ENCODE measurements at regions of chr20 and their contacts with region 1.

Region 1: GRCh38 chr20:21235484-21236445 is 67.4 kb upstream of the XRN2 start:
- DNase-seq: peak; percentile 62
- ATAC-seq: peak; percentile 49
- H3K4me3 ChIP-seq: no peak overlapping the region
- H3K4me3 Mint-ChIP-seq: no peak overlapping the region
- H3K27ac ChIP-seq: no peak overlapping the region
- H3K27ac Mint-ChIP-seq: no peak overlapping the region
- H3K4me1 ChIP-seq: peaks cover 0 to 4% of the 10 kb centered on the region in 2 donors
- H3K4me1 Mint-ChIP-seq: peaks cover 1% of the 10 kb centered on the region
- H3K27me3 ChIP-seq: no peaks in the 10 kb centered on the region
- H3K27me3 Mint-ChIP-seq: no peaks in the 10 kb centered on the region
- CTCF ChIP-seq: peak; percentile 95

Region 2: GRCh38 chr20:21182832-21183563 is 52.8 kb before region 1 on chr20:
- CTCF ChIA-PET with region 1: no interaction called
- POLR2A ChIA-PET with region 1: no interaction called
- intact Hi-C with region 1: no loop called
- DNase-seq: no peak
- ATAC-seq: no peak
- H3K4me3 ChIP-seq: no peak overlapping the region
- H3K4me3 Mint-ChIP-seq: no peak overlapping the region
- H3K27ac ChIP-seq: no peak overlapping the region
- H3K27ac Mint-ChIP-seq: no peak overlapping the region
- H3K4me1 ChIP-seq: no peaks in the 10 kb centered on the region
- H3K4me1 Mint-ChIP-seq: no peaks in the 10 kb centered on the region
- H3K27me3 ChIP-seq: no peaks in the 10 kb centered on the region
- H3K27me3 Mint-ChIP-seq: no peaks in the 10 kb centered on the region
- CTCF ChIP-seq: no peak

Region 3: GRCh38 chr20:21225215-21225947 is 10.4 kb before region 1 on chr20:
- CTCF ChIA-PET with region 1: interaction called, 23 read pairs
- POLR2A ChIA-PET with region 1: no interaction called
- intact Hi-C with region 1: no loop called
- DNase-seq: no peak
- ATAC-seq: no peak
- H3K4me3 ChIP-seq: no peak overlapping the region
- H3K4me3 Mint-ChIP-seq: no peak overlapping the region
- H3K27ac ChIP-seq: no peak overlapping the region
- H3K27ac Mint-ChIP-seq: no peak overlapping the region
- H3K4me1 ChIP-seq: peaks cover 6 to 8% of the 10 kb centered on the region in 2 donors
- H3K4me1 Mint-ChIP-seq: peaks cover 7% of the 10 kb centered on the region
- H3K27me3 ChIP-seq: no peaks in the 10 kb centered on the region
- H3K27me3 Mint-ChIP-seq: no peaks in the 10 kb centered on the region
- CTCF ChIP-seq: no peak

Region 4: GRCh38 chr20:21246161-21246560 is 10.4 kb after region 1 on chr20:
- CTCF ChIA-PET with region 1: interaction called, 20 read pairs
- POLR2A ChIA-PET with region 1: no interaction called
- intact Hi-C with region 1: no loop called
- DNase-seq: no peak
- ATAC-seq: no peak
- H3K4me3 ChIP-seq: no peak overlapping the region
- H3K4me3 Mint-ChIP-seq: no peak overlapping the region
- H3K27ac ChIP-seq: no peak overlapping the region
- H3K27ac Mint-ChIP-seq: no peak overlapping the region
- H3K4me1 ChIP-seq: no peaks in the 10 kb centered on the region
- H3K4me1 Mint-ChIP-seq: no peaks in the 10 kb centered on the region
- H3K27me3 ChIP-seq: no peaks in the 10 kb centered on the region
- H3K27me3 Mint-ChIP-seq: no peaks in the 10 kb centered on the region
- CTCF ChIP-seq: no peak

Region 5: DNA sequence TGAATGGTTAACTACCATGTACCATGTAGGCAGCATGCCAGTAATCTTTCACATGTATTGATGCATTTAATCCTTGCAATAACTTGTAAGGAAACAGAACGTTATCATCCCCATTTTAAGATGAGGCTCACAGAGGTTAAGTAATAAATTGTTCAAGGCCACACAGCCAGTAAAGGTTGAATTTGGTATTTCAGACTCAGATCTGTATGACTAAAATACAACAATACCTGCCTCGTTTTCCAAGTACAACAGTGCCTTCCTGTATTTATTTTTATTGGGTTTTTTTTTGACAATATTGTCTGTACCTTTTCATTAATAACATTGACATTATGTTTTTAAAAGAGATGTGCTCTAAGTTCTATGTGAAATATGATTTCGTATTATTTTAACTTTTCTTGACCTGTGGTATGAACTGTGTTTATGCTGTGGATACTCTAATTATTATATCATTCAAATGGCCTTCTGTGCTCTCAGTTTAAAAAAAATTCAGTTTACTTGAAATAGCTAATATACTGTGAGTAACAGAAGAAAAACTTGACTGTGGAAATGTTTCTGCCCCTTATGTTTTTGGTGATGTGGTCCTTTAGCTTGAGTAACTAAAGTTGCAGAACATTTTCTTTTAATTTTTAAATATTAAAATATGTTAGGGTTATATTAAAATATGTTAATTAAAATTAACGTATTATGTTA is 107.0 kb after region 1 on chr20:
- CTCF ChIA-PET with region 1: no interaction called
- POLR2A ChIA-PET with region 1: no interaction called
- intact Hi-C with region 1: loop called (anchors 10 kb)
- DNase-seq: no peak
- ATAC-seq: no peak
- H3K4me3 ChIP-seq: no peak overlapping the region
- H3K4me3 Mint-ChIP-seq: no peak overlapping the region
- H3K27ac ChIP-seq: no peak overlapping the region
- H3K27ac Mint-ChIP-seq: no peak overlapping the region
- H3K4me1 ChIP-seq: no peaks in the 10 kb centered on the region
- H3K4me1 Mint-ChIP-seq: no peaks in the 10 kb centered on the region
- H3K27me3 ChIP-seq: no peaks in the 10 kb centered on the region
- H3K27me3 Mint-ChIP-seq: no peaks in the 10 kb centered on the region
- CTCF ChIP-seq: no peak

Region 6: DNA sequence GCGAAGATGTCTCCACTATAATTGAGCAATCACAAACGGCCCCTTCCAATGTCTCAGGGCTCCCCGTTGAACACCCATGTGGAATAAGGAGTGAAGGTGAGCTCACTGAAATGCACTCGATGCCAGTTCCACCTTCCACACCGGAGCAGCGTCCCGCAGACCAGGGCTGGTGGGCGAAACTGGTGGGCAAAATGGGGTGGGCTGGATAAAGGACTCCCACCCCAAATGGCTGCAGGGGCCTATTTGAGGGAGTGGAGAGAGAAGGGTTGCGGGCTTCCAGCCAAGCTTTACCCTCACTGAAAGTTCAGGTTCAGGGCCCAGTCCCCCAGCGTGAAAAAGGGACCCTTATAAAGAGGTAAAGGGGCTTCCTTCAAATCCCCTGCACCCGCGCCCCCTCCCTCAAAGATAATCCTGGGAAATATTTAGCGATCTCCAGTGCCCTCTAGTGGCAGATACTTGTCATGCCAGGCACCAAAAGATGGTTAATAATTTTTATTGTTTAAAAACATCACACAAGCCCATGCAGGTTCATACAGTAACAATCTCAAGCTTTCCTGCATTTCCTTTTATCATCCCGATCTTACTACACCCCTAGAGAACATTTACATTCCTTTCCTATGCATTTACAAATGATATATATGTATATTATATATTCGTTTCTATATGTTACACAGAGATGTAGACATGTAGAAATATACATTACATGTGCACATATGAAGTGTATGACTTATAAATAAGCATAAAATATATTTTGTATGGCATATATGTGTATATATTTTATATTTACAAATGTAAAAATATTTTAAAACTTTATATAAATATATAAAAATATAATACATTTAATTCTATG is 336.3 kb after region 1 on chr20:
- CTCF ChIA-PET with region 1: interaction called, 23 read pairs
- POLR2A ChIA-PET with region 1: no interaction called
- intact Hi-C with region 1: no loop called
- DNase-seq: peak; percentile 23
- ATAC-seq: no peak
- H3K4me3 ChIP-seq: no peak overlapping the region
- H3K4me3 Mint-ChIP-seq: no peak overlapping the region
- H3K27ac ChIP-seq: no peak overlapping the region
- H3K27ac Mint-ChIP-seq: no peak overlapping the region
- H3K4me1 ChIP-seq: no peaks in the 10 kb centered on the region
- H3K4me1 Mint-ChIP-seq: no peaks in the 10 kb centered on the region
- H3K27me3 ChIP-seq: peaks cover 0 to 18% (median 2%) of the 10 kb centered on the region in 4 experiments
- H3K27me3 Mint-ChIP-seq: peaks cover 22% of the 10 kb centered on the region
- CTCF ChIP-seq: peak; percentile 95

Region 7: DNA sequence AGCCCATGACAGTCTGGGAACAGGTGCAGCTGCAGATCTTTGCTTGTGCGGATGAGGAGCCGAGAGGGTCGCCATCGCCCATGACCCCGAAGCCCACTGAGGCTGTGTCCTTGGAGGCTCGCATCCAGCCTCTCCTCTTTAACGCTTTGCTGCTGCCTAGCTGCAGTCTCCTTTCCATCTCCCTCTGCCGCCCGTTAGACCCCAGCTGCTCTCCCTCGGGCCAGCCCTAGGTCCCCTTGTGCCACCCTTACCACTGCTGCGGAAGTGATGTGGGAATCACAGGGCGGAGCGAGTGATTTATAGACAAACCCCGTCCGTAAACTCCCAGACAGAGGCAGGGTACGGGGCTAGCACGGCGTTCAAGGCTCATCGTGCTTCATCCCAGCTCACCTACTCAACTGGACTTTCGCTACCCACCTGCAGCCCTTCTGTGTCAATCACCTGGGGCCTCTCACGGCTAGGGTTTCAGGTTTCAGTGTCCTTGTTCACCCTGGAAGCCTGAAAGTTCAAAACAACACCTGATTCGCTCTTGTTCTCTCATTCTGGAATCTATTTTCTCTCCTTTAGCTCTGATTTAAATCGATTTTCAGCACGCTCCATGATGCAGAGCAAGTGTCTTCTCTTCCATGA is 545.8 kb after region 1 on chr20:
- CTCF ChIA-PET with region 1: no interaction called
- POLR2A ChIA-PET with region 1: no interaction called
- intact Hi-C with region 1: no loop called
- DNase-seq: no peak
- ATAC-seq: no peak
- H3K4me3 ChIP-seq: no peak overlapping the region
- H3K4me3 Mint-ChIP-seq: no peak overlapping the region
- H3K27ac ChIP-seq: no peak overlapping the region
- H3K27ac Mint-ChIP-seq: no peak overlapping the region
- H3K4me1 ChIP-seq: no peaks in the 10 kb centered on the region
- H3K4me1 Mint-ChIP-seq: no peaks in the 10 kb centered on the region
- H3K27me3 ChIP-seq: no peaks in the 10 kb centered on the region
- H3K27me3 Mint-ChIP-seq: peaks cover 3% of the 10 kb centered on the region
- CTCF ChIP-seq: no peak

Measured in B cell (primary cell).